ENCODE measurements at regions of chr15 and their contacts with region 1.

Region 1: GRCh38 chr15:76994971-76995945 is at the start of gene PSTPIP1:
- DNase-seq: peak; percentile 52 to 79 (median 74)
- ATAC-seq: peak; percentile 83
- H3K4me3 ChIP-seq: peak within 1 kb of the TSS; percentile 90
- H3K4me3 Mint-ChIP-seq: peak within 1 kb of the TSS; percentile 93 to 99 (median 96)
- H3K27ac ChIP-seq: peak within 1 kb of the TSS; percentile 80
- H3K27ac Mint-ChIP-seq: peak within 1 kb of the TSS; percentile 88 to 98 (median 96)
- H3K4me1 ChIP-seq: peaks cover 57 to 58% of the 10 kb centered on the region in 2 donors
- H3K4me1 Mint-ChIP-seq: peaks cover 61 to 76% (median 65%) of the 10 kb centered on the region in 7 donors
- H3K27me3 ChIP-seq: no peaks in the 10 kb centered on the region
- H3K27me3 Mint-ChIP-seq: no peaks in the 10 kb centered on the region
- total RNA-seq, gene PSTPIP1: 101 to 182 (median 146) TPM

Region 2: GRCh38 chr15:77070495-77071304 is 75.4 kb after region 1 on chr15 and contains the start of gene TSPAN3:
- CTCF ChIA-PET with region 1: no interaction called
- POLR2A ChIA-PET with region 1: interaction called, 4 read pairs
- intact Hi-C with region 1: loop called in 1 of 2 experiments (anchors 2 kb)
- DNase-seq: peak; percentile 88 to 93 (median 92)
- ATAC-seq: peak; percentile 99
- H3K4me3 ChIP-seq: peak within 1 kb of the TSS; percentile 50
- H3K4me3 Mint-ChIP-seq: peak within 1 kb of the TSS; percentile 81 to 90 (median 86)
- H3K27ac ChIP-seq: peak within 1 kb of the TSS; percentile 62
- H3K27ac Mint-ChIP-seq: peak within 1 kb of the TSS; percentile 54 to 93 (median 80)
- H3K4me1 ChIP-seq: peaks cover 5 to 14% of the 10 kb centered on the region in 2 donors
- H3K4me1 Mint-ChIP-seq: peaks cover 7 to 48% (median 29%) of the 10 kb centered on the region in 7 donors
- H3K27me3 ChIP-seq: peaks cover 0 to 2% of the 10 kb centered on the region in 2 donors
- H3K27me3 Mint-ChIP-seq: peaks cover 0 to 22% (median 0%) of the 10 kb centered on the region in 5 donors
- total RNA-seq, gene TSPAN3: 17.5 to 24.4 (median 21.7) TPM

Measured in naive thymus-derived CD4-positive, alpha-beta T cell (primary cell).